ENCODE measurements at regions of chr11 and their contacts with region 1.

Region 1: DNA sequence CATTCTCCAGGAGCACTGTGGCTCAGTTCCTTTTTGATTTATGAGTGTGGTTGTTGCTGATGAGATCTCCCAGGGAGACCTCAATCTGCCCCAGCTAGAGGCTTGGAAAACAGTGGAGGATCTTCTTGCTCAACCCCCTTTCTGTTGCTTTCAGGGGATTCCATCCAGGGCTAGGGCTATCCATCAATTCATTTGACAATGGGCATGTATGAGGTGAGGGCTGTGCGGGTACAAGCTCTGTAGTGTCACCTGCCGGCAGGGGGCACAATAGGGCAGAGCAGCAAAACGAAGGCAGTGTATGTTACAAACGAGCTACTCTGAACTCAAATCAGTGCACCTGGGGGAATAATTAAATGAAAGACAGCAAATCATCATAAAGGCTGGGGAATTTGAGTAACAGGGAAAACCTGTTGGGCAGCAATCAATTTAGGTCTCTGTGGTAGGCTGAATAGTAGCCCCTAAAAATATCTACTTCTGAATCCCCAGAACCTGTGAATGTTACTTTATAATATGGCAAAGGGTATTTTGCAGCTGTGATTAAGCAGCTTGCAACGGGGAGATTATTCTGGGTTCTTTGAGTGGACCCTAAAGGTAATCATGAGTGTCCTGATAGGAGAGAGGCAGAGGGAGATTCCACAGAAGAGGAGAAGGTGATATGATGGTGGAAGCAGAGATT is 170.3 kb upstream of the ZBED5 start:
- DNase-seq: no peak
- H3K4me3 ChIP-seq: no peak overlapping the region
- H3K27ac ChIP-seq: no peak overlapping the region
- H3K4me1 ChIP-seq: peaks cover 0 to 16% (median 3%) of the 10 kb centered on the region in 4 donors
- H3K27me3 ChIP-seq: no peaks in the 10 kb centered on the region
- CTCF ChIP-seq: peak; percentile 75 to 84 (median 84)
- EP300 ChIP-seq: no peak
- POLR2A ChIP-seq: no peak

Region 2: DNA sequence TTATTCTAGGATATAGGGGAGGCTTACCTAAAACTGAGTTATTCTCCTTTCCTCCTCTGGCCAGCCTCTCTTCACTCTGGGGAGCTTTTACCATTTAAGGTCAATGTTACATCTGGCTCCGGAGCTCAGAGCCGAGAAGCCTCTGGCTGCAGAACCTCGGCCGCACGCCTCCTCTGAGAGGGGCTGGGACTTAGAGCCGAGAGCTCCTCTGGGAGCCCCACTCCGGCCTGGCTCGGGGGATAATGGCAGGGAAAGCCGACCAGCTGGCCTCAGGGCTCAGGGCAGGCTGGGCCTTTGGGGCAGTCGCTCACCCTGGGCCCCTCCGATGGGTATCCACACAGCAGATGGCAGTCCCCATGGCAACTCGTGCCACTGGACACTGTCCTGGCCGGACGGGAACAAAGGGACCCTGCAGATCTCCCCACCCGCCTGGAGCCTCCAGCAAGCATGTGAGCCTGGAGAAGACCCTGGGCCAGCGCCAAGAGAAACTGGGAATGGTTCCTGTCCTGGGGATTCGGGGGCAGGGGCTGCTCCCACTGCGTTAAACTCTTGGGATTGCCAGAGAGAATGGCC is 334.6 kb before region 1 on chr11 and contains the start of gene IRAG1:
- intact Hi-C with region 1: no loop called
- DNase-seq: no peak
- H3K4me3 ChIP-seq: peak within 1 kb of the TSS; percentile 52 to 75 (median 68)
- H3K27ac ChIP-seq: peak within 1 kb of the TSS; percentile 90 to 96 (median 95)
- H3K4me1 ChIP-seq: peaks cover 0 to 58% (median 43%) of the 10 kb centered on the region in 4 donors
- H3K27me3 ChIP-seq: no peaks in the 10 kb centered on the region
- CTCF ChIP-seq: no peak
- EP300 ChIP-seq: no peak
- POLR2A ChIP-seq: peak; percentile 14
- total RNA-seq, gene IRAG1: 205 to 338 (median 276) TPM

Region 3: DNA sequence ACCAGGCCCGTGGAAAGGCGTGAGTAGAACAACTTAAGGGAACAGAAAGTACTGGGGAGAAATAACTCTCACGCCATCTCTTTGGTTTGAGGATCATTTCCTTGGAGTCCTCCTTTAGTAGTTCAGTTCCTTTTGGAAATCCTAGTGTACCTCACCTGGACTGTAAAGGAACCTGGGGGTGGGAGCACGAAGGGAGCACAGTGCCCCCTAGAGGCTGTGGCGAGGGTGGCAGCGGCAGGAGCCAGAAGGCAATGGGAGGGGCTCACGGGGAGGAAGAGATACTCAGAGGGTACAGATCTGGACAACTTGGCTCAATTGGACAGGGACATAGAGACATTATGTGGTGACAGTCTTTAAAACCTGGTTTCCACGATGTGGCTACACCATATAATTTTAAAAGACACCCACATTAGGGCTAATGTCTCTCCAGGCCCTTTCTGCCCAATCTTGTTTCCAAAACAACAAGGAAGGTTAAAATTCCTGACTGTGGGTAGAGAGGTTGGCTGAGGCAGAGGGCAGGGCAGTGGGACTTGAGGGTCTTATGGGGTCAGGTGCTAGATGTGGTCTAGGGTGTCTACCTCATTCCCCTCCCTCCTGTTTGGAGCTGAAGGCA is 237.9 kb after region 1 on chr11:
- intact Hi-C with region 1: loop called (anchors 5 kb)
- DNase-seq: no peak
- H3K4me3 ChIP-seq: no peak overlapping the region
- H3K27ac ChIP-seq: no peak overlapping the region
- H3K4me1 ChIP-seq: peaks cover 6 to 37% (median 22%) of the 10 kb centered on the region in 4 donors
- H3K27me3 ChIP-seq: no peaks in the 10 kb centered on the region
- CTCF ChIP-seq: peak; percentile 62 to 89 (median 79)
- EP300 ChIP-seq: no peak
- POLR2A ChIP-seq: no peak

Region 4: GRCh38 chr11:11787305-11788062 is 759.3 kb after region 1 on chr11:
- intact Hi-C with region 1: loop called (anchors 2 kb)
- DNase-seq: peak; percentile 57
- H3K4me3 ChIP-seq: no peak overlapping the region
- H3K27ac ChIP-seq: no peak overlapping the region
- H3K4me1 ChIP-seq: peaks cover 0 to 17% (median 3%) of the 10 kb centered on the region in 4 donors
- H3K27me3 ChIP-seq: no peaks in the 10 kb centered on the region
- CTCF ChIP-seq: peak; percentile 85 to 95 (median 94)
- EP300 ChIP-seq: no peak
- POLR2A ChIP-seq: no peak